ENCODE measurements at regions of chr15 and their contacts with region 1.

Region 1: GRCh38 chr15:63188926-63189871 is at the start of gene RAB8B:
- DNase-seq: peak; percentile 95
- H3K4me3 Mint-ChIP-seq: peak within 1 kb of the TSS; percentile 96
- H3K27ac Mint-ChIP-seq: peak within 1 kb of the TSS; percentile 92
- H3K4me1 Mint-ChIP-seq: peaks cover 48% of the 10 kb centered on the region
- H3K27me3 Mint-ChIP-seq: peaks cover 10% of the 10 kb centered on the region
- total RNA-seq, gene RAB8B: 135 and 149 TPM in 2 replicates

Region 2: GRCh38 chr15:63054985-63055384 is 134.2 kb before region 1 on chr15:
- intact Hi-C with region 1: loop called (anchors 1 kb)
- DNase-seq: no peak
- H3K4me3 Mint-ChIP-seq: no peak overlapping the region
- H3K27ac Mint-ChIP-seq: no peak overlapping the region
- H3K4me1 Mint-ChIP-seq: peaks cover under 1% of the 10 kb centered on the region
- H3K27me3 Mint-ChIP-seq: peaks cover 8% of the 10 kb centered on the region

Region 3: GRCh38 chr15:63172376-63173109 is 16.7 kb before region 1 on chr15:
- intact Hi-C with region 1: loop called (anchors 1 kb)
- DNase-seq: no peak
- H3K4me3 Mint-ChIP-seq: no peak overlapping the region
- H3K27ac Mint-ChIP-seq: no peak overlapping the region
- H3K4me1 Mint-ChIP-seq: peaks cover 7% of the 10 kb centered on the region
- H3K27me3 Mint-ChIP-seq: no peaks in the 10 kb centered on the region

Region 4: GRCh38 chr15:63232405-63232804 is 43.2 kb after region 1 on chr15:
- intact Hi-C with region 1: loop called (anchors 1 kb)
- DNase-seq: no peak
- H3K4me3 Mint-ChIP-seq: peak overlapping the region; percentile 47
- H3K27ac Mint-ChIP-seq: peak overlapping the region; percentile 72
- H3K4me1 Mint-ChIP-seq: peaks cover 63% of the 10 kb centered on the region
- H3K27me3 Mint-ChIP-seq: no peaks in the 10 kb centered on the region

Region 5: DNA sequence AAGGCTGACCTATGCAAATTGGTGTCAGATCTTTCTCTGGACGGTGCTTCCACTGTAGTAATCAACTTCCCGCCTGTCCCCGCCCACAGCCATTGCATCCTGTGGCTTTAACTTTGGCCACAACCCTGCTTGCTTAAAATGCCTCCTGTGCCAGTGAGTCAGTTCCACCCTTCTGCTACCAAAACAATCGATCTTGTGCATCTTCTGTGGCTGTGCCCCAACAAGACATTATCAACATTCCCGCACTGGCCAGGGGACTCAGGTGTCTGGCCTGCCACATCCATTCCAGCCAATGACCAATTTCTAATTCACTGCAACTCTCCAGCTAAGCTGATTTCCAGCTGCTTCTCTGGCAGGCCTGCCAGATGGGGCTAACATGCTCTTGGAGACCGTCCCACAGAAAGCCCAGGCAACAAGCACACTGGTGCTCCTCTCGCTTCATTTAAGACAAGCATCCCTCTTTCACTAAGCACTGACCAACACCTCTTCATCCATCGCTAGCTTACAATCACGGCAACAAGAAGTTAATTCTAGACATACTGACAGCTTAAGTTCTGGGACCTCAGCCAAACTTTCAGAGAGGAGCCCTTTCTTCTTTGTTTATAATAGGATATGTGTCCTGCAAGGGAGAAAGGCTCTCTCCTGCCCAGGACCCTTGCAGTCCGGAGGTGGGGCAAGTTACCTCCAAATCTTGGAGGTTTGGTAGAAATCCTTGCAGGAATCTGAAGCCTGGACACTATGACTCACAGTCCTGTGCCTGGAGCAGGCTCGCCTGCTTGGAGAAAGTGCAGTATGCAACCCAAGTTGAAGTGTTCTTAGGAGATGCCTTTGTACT is 185.7 kb after region 1 on chr15:
- intact Hi-C with region 1: loop called (anchors 5 kb)
- DNase-seq: no peak
- H3K4me3 Mint-ChIP-seq: no peak overlapping the region
- H3K27ac Mint-ChIP-seq: peak overlapping the region; percentile 87
- H3K4me1 Mint-ChIP-seq: peaks cover 42% of the 10 kb centered on the region
- H3K27me3 Mint-ChIP-seq: peaks cover 9% of the 10 kb centered on the region

Region 6: GRCh38 chr15:63600616-63601025 is 411.4 kb after region 1 on chr15:
- intact Hi-C with region 1: loop called (anchors 10 kb)
- DNase-seq: peak; percentile 86
- H3K4me3 Mint-ChIP-seq: peak overlapping the region; percentile 88
- H3K27ac Mint-ChIP-seq: peak overlapping the region; percentile 87
- H3K4me1 Mint-ChIP-seq: peaks cover 51% of the 10 kb centered on the region
- H3K27me3 Mint-ChIP-seq: peaks cover 2% of the 10 kb centered on the region

Measured in activated T-helper 1 cell treated with anti-CD3 and anti-CD28 coated beads, Interleukin-12 subunit alpha, Interleukin-12 subunit beta, Interleukin-2, Interleukin-4 antibody, amounts not matched to agents 30 ng/mL and 10 ng/mL and 1 ng/mL, durations not matched to agents 14 hours and 24 hours and 36 hours (primary cell).